Transverse colon (tissue), 4 donors: ENCODE measurements at regions of chr4 and their contacts with region 1.

Region 1: DNA sequence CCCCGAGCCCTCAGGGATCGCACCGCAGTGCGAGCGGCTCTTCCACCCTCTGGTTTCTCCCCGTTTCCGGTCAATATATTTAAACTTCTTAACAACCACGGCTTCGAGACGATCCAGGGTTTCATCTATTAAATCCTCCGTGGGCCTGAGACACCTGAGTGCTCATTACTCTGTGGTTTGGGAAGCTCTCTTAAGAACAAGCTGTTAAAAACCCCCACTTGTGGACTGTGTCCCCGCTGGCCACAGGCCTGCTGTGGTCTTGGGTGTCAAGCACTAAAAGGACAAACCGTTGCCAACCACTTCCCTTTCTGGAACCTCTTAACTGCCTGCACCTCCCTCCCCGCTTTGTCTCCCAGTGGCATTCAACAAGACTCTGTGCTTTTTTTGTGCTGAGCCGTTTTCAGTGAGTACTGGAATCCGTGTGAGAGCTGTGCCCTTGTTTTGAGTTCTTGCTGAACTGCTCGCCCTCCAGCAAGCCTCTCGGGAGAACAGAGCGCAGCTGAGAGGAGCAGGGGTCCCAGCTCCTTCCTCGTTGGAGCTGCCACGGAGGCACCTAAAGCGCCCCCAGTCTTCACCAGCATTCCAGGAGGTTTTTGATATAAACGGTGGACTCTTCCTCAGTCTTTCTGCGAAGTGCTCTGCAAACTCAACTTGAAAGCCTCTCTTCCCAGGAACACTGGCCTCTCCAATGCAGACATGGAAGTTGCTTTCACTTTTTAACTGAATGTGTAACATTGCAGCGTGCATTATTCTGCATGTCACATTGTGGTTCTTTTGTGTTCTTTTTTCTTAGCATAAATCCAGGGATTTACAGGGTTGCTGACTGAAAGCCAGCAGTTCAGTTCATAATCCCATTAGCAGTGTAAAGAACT is 691 bp upstream of the IGFBP7 start:
- DNase-seq: peak; percentile 30
- H3K4me3 ChIP-seq: peak overlapping the region in 3 of 4 donors; percentile 55 to 83 (median 67)
- H3K27ac ChIP-seq: peak overlapping the region; percentile 87 to 93 (median 89)
- H3K4me1 ChIP-seq: peaks cover 0 to 32% (median 9%) of the 10 kb centered on the region in 4 donors
- H3K27me3 ChIP-seq: peaks cover 22% of the 10 kb centered on the region
- CTCF ChIP-seq: no peak
- EP300 ChIP-seq: no peak
- POLR2A ChIP-seq: no peak

Region 2: DNA sequence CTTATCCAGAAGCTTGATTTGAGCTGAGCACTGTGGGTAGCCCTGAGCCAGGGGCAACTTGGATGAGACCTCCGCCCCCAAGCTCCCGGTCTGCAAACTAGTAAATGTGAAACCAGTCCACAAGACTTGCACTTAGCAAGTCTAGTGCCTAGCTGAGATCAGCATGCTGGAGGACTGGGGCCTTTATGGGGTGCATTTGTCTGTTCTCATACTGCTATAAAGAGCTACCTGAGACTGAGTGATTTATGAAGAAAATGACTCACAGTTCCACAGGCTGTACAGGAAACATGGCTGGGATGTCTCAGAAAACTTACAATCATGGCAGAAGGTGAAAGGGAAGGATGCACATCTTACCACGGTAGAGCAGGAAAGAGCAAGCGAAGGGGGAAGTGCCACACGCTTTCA is 387.7 kb before region 1 on chr4:
- in situ Hi-C with region 1: no loop called
- intact Hi-C with region 1: no loop called
- DNase-seq: no peak
- H3K4me3 ChIP-seq: no peak overlapping the region
- H3K27ac ChIP-seq: no peak overlapping the region
- H3K4me1 ChIP-seq: peaks cover 2 to 7% (median 4%) of the 10 kb centered on the region in 4 donors
- H3K27me3 ChIP-seq: no peaks in the 10 kb centered on the region
- CTCF ChIP-seq: no peak
- EP300 ChIP-seq: no peak
- POLR2A ChIP-seq: no peak

Region 3: GRCh38 chr4:57037982-57038604 is 72.8 kb before region 1 on chr4:
- in situ Hi-C with region 1: no loop called
- intact Hi-C with region 1: loop called (anchors 5 kb)
- DNase-seq: peak; percentile 67
- H3K4me3 ChIP-seq: no peak overlapping the region
- H3K27ac ChIP-seq: no peak overlapping the region
- H3K4me1 ChIP-seq: peaks cover 0 to 8% (median 3%) of the 10 kb centered on the region in 4 donors
- H3K27me3 ChIP-seq: no peaks in the 10 kb centered on the region
- CTCF ChIP-seq: peak; percentile 67 to 85 (median 83)
- EP300 ChIP-seq: no peak
- POLR2A ChIP-seq: no peak